Activated T-helper 1 cell treated with anti-CD3 and anti-CD28 coated beads, Interleukin-12 subunit alpha, Interleukin-12 subunit beta, Interleukin-2, Interleukin-4 antibody, amounts not matched to agents 30 ng/mL and 10 ng/mL and 1 ng/mL, durations not matched to agents 14 hours and 24 hours and 36 hours (primary cell): ENCODE measurements at regions of chr2 and their contacts with region 1.

Region 1: GRCh38 chr2:105858868-105859693 is 114.4 kb downstream of the NCK2 start:
- DNase-seq: no peak
- H3K4me3 Mint-ChIP-seq: peak overlapping the region; percentile 53
- H3K27ac Mint-ChIP-seq: peak overlapping the region; percentile 89
- H3K4me1 Mint-ChIP-seq: peaks cover 90% of the 10 kb centered on the region
- H3K27me3 Mint-ChIP-seq: peaks cover 2% of the 10 kb centered on the region

Region 2: GRCh38 chr2:105576440-105577252 is 282.4 kb before region 1 on chr2:
- intact Hi-C with region 1: loop called (anchors 5 kb)
- DNase-seq: no peak
- H3K4me3 Mint-ChIP-seq: no peak overlapping the region
- H3K27ac Mint-ChIP-seq: no peak overlapping the region
- H3K4me1 Mint-ChIP-seq: peaks cover 15% of the 10 kb centered on the region
- H3K27me3 Mint-ChIP-seq: no peaks in the 10 kb centered on the region

Region 3: GRCh38 chr2:105789745-105790460 is 69.2 kb before region 1 on chr2:
- intact Hi-C with region 1: loop called (anchors 1 kb)
- DNase-seq: peak; percentile 66
- H3K4me3 Mint-ChIP-seq: peak overlapping the region; percentile 66
- H3K27ac Mint-ChIP-seq: peak overlapping the region; percentile 92
- H3K4me1 Mint-ChIP-seq: peaks cover 85% of the 10 kb centered on the region
- H3K27me3 Mint-ChIP-seq: no peaks in the 10 kb centered on the region

Region 4: GRCh38 chr2:105802587-105802986 is 56.5 kb before region 1 on chr2:
- intact Hi-C with region 1: loop called (anchors 1 kb)
- DNase-seq: peak; percentile 70
- H3K4me3 Mint-ChIP-seq: peak overlapping the region; percentile 58
- H3K27ac Mint-ChIP-seq: peak overlapping the region; percentile 88
- H3K4me1 Mint-ChIP-seq: peaks cover 93% of the 10 kb centered on the region
- H3K27me3 Mint-ChIP-seq: no peaks in the 10 kb centered on the region

Region 5: DNA sequence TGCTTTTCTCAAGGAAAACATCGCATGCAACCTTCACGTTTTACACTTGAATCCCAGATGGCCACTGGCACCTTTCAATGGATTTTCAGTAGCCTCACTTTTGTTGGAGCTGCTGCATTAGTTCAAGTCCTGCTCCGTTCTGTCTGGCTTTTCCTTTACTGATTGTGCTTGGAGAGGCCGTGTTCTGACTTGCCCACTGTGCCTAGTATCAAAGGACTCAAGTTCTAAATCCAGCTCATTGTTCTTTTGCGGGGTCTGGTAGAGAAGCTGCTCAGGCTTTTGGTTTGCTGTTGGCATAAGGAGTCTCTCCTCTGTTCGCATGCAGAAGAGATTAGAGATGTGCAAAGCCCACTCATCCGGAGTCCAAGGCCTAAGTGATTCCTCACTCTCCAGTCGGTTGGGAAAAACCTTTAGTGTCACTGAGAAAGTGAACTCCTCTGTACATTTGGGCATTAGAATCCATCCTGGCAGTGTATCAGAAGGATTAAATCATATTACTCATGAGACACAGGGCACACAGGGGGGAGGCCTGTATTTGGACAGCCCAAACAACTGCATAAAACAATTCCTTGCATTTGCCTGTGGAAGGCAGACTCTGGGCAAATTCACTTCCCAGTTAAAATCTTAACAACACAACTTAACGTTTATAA is 44.7 kb before region 1 on chr2:
- intact Hi-C with region 1: no loop called
- DNase-seq: no peak
- H3K4me3 Mint-ChIP-seq: no peak overlapping the region
- H3K27ac Mint-ChIP-seq: peak overlapping the region; percentile 23
- H3K4me1 Mint-ChIP-seq: peaks cover 47% of the 10 kb centered on the region
- H3K27me3 Mint-ChIP-seq: no peaks in the 10 kb centered on the region

Region 6: DNA sequence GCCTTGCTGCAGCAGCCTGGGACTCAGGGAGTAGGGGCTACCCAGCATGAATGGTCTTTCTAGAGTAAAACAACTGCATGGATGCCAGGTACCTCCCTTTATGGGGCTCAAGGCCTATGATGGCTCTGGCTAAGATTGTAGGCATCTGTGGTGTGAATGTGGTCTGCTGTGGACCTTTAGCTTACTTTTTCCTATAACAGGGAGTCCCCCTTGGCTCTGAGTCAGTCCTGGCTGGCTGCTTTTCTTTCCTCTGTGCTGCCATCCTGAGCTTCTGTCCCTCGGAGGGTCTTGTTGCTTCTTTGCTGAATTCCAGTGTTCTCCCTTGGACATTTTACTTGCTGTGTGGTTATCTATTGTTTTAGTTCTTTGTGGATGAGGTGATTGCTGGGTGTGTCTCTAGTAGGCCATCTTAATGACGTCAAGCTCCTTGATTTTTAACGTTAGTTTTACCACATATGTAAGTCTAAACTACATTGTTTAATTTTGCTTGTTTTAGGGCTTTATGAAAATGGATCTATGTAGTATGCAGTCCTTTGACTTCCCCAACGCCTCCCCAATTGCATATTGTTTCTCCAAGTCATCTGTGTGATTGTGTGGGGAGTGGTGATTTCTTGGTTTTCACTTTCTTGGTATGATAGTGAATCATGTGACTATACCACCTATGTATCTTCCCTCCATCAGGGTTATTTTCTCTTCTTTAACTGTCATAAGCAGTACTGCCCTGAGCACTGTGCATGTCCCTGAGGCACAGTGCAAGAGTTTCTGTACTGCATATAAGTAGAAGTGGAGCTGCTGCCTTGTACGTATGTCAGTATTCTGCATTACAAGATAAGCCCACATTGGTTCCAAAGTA is 22.0 kb before region 1 on chr2:
- intact Hi-C with region 1: loop called (anchors 1 kb)
- DNase-seq: no peak
- H3K4me3 Mint-ChIP-seq: peak overlapping the region; percentile 44
- H3K27ac Mint-ChIP-seq: peak overlapping the region; percentile 61
- H3K4me1 Mint-ChIP-seq: peaks cover 89% of the 10 kb centered on the region
- H3K27me3 Mint-ChIP-seq: no peaks in the 10 kb centered on the region

Region 7: GRCh38 chr2:105926960-105927678 is 68.0 kb after region 1 on chr2:
- intact Hi-C with region 1: loop called (anchors 2 kb)
- DNase-seq: peak; percentile 49
- H3K4me3 Mint-ChIP-seq: peak overlapping the region; percentile 23
- H3K27ac Mint-ChIP-seq: peak overlapping the region; percentile 85
- H3K4me1 Mint-ChIP-seq: peaks cover 44% of the 10 kb centered on the region
- H3K27me3 Mint-ChIP-seq: no peaks in the 10 kb centered on the region

Region 8: GRCh38 chr2:106193977-106194778 is 335.1 kb after region 1 on chr2 and contains the start of gene UXS1:
- intact Hi-C with region 1: loop called (anchors 5 kb)
- DNase-seq: peak; percentile 95
- H3K4me3 Mint-ChIP-seq: peak within 1 kb of the TSS; percentile 86
- H3K27ac Mint-ChIP-seq: peak within 1 kb of the TSS; percentile 92
- H3K4me1 Mint-ChIP-seq: peaks cover 46% of the 10 kb centered on the region
- H3K27me3 Mint-ChIP-seq: peaks cover 5% of the 10 kb centered on the region
- total RNA-seq, gene UXS1: 36.7 TPM in 2 replicates